Activated CD4-positive, alpha-beta memory T cell treated with anti-CD3 and anti-CD28 coated beads for 36 hours (primary cell): ENCODE measurements at regions of chr14 and their contacts with region 1.

Region 1: DNA sequence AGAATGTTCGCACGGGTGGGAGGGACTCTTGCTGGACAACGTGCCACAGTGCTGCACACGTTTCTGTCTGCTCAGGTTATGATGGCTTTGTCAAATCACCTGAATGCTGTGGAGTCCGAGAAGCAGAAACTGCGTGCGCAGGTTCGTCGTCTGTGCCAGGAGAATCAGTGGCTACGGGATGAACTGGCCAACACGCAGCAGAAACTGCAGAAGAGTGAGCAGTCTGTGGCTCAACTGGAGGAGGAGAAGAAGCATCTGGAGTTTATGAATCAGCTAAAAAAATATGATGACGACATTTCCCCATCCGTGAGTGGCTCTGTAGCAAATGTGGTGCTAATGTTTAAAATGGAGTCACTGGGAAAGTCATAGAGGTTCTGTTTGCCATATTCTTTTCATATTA is 28.5 kb downstream of the KLC1 start:
- DNase-seq: no peak
- H3K4me3 Mint-ChIP-seq: no peak overlapping the region
- H3K27ac Mint-ChIP-seq: no peak overlapping the region
- H3K4me1 Mint-ChIP-seq: peaks cover 10% of the 10 kb centered on the region
- H3K27me3 Mint-ChIP-seq: no peaks in the 10 kb centered on the region

Region 2: DNA sequence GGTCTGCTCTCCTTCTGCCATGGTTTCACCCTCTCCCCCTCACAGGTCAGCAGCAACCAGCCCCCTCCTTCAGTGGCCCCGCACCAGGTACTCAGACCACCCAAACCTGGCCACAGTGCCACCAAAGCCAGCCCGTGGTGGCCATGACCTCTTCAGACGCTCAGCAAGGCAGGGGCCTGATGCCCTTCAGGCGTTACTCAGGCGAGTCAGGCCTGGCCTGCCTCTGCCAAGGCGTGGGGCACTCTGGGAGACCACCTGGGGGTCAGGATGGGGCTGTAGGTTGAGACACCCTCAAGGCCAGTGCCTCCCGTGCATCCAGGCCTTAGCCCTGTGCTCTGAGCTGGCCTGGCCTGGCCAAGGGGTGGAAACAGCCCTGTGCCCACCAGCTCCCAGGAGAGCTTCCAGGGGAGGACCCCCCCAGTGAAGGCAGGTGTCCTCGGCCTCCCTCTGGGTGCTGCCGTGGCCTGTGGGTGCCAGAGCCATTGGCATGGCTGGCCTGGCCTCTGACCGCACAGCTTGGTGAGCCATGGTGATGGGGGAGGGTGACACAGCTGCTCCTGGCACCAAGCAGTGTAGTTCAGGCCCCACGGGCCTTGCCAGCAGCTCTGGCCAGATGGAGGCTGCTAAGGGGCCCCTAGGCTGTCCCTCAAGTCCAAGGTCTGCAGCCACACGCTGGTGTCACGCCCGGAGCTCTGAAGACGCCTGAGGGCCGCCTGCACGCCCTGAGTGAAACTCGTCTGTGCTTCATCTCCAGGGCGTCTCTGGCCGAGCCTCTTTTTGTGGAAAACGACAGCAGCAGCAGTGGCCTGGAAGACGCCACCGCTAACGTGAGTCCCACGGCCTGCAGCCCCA is 42.7 kb after region 1 on chr14:
- CTCF ChIA-PET with region 1: no interaction called
- POLR2A ChIA-PET with region 1: no interaction called
- intact Hi-C with region 1: no loop called
- DNase-seq: no peak
- H3K4me3 Mint-ChIP-seq: no peak overlapping the region
- H3K27ac Mint-ChIP-seq: peak overlapping the region; percentile 9
- H3K4me1 Mint-ChIP-seq: peaks cover 6% of the 10 kb centered on the region
- H3K27me3 Mint-ChIP-seq: no peaks in the 10 kb centered on the region

Region 3: DNA sequence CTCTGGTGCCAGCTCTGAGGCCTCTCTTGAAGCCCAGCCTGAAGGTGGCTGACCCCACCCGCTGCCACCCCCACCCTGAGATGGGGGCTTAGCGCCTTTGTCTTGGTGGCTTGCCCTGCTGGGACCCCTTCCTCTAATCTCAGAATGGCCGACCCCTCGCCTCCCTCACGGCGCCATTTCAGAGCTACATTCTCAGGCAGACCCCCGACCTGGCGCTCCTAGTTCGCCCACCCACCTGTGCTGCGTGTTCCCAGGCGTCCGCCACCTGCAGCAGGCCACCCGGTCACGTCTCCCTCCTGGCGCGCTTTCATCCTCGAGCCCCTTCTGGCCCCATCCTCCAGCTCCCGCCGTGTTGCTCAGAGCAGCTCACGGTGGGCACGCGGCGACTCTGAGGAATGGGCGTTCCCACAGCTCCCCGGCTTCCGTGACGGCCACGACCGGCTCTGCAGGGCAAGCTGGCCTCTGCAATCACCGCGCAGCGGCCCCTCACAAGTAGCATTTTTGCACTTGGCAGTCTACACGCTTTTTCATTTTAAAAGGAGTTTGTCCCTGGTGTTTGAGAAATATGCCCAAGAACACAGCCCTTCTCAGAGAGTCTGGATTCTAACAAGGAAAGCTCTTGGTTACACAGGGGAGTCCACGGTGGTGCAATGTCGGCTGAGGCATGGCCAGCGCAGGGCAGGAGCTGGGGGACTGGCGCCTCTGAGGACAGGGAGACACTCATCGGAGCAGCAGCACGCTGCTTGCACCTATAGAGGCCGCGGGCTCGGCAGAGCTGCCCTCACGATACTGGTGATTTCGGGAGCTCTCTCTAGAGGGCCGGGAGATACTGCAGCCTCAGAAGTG is 816.4 kb after region 1 on chr14:
- CTCF ChIA-PET with region 1: no interaction called
- POLR2A ChIA-PET with region 1: no interaction called
- intact Hi-C with region 1: loop called (anchors 10 kb)
- DNase-seq: no peak
- H3K4me3 Mint-ChIP-seq: no peak overlapping the region
- H3K27ac Mint-ChIP-seq: no peak overlapping the region
- H3K4me1 Mint-ChIP-seq: no peaks in the 10 kb centered on the region
- H3K27me3 Mint-ChIP-seq: peaks cover 5% of the 10 kb centered on the region